HepG2 (cell line): ENCODE measurements at regions of chr12 and their contacts with region 1.

Region 1: GRCh38 chr12:94074980-94075928 is 73.1 kb upstream of the PLXNC1 start:
- DNase-seq: peak; percentile 60
- ATAC-seq: peak; percentile 81
- H3K4me3 ChIP-seq: no peak overlapping the region
- H3K27ac ChIP-seq: no peak overlapping the region
- H3K4me1 ChIP-seq: peaks cover 63% of the 10 kb centered on the region
- H3K27me3 ChIP-seq: no peaks in the 10 kb centered on the region
- CTCF ChIP-seq: peak; percentile 64
- EP300 ChIP-seq: no peak
- POLR2A ChIP-seq: no peak
- RAD21 ChIP-seq: 0 out of 2 replicates have a peak, but pooled peaks have one; percentile 28

Region 2: DNA sequence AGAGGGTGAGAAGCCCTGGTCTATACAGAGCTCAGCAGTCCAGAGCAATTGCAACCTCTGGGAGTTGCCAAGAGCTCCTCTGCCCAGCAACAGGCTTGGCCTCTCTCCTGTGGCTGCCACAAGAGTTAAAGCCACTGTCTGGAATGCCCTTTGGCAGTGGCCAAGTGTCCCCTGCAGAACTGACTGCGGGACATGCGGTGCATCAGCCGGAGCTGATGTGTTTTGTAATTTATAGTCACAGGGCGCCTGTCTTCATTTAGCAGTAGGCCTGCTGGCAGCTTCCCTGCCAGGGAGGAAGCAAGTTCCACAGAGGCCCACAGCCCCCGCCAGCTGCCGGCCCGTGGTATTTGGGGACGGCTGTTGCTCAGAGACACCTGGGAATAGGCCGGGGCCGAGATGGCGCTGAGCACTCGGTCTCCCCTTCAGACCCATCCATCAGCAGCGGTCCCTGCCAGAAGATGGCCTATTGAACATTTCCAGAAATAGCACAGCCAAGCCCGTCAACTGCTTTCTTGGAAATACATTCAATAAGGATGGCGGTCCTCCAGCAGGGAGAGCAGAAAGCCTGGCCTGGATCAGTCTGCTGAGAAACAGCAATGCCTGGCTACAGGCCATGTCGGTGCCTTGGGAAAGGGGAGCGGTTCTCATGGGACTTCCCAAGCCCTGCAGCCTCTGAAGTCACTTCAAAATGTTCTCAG is 180.7 kb before region 1 on chr12:
- CTCF ChIA-PET with region 1: no interaction called
- POLR2A ChIA-PET with region 1: no interaction called
- in situ Hi-C with region 1: no loop called
- intact Hi-C with region 1: no loop called
- DNase-seq: no peak
- ATAC-seq: no peak
- H3K4me3 ChIP-seq: no peak overlapping the region
- H3K27ac ChIP-seq: no peak overlapping the region
- H3K4me1 ChIP-seq: no peaks in the 10 kb centered on the region
- H3K27me3 ChIP-seq: 0 out of 5 replicates have a peak, but pooled peaks cover 0 to 1% of the 10 kb centered on the region in 2 experiments
- CTCF ChIP-seq: no peak
- EP300 ChIP-seq: no peak
- POLR2A ChIP-seq: no peak
- RAD21 ChIP-seq: no peak

Region 3: DNA sequence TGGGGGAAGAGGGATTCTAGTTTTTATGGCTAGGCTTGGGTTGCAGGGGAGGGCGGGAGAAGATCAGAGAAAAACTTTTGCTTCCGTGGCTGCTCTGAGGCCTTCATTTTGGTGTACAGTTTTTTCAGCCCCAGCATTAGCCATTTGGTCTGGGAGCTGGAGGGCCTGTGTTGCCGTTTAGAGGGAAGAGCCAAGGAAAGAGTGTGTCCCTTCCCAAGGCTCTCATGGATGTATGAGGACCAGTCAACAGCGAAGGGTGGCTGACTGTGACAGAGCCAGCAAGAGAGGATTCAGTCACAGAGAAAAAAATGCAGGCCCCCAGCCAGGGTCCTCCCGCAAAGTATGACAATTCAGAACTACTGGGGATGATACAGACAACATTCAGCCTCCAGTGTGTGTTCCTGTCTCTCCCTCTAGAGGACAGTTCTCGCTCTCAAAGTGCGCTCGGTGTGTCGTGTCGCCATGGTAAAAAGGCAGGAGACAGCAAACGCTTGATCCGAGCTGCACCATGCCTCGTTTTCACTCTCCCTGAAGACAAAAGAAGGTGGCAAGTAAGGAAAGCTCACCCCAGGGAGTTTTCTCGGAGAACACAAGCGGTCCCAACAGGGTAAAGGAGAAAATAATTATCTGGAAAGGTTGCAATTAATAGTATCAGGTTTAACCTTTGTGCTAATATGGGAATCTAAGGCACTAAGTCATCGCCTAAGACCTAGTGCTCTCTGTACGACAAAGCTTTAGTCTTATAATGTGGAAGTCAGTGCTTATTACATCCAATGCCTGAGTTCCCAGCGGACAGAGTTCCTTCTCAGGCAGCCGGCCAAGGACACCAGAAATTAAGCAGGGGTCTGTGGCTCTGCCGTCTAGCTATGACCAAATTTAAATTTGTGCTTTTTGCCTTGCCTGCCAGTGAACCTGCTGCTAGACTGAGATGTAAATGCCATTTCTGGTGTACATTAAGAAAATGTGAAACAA is 84.1 kb before region 1 on chr12:
- CTCF ChIA-PET with region 1: no interaction called
- POLR2A ChIA-PET with region 1: no interaction called
- in situ Hi-C with region 1: no loop called
- intact Hi-C with region 1: loop called (anchors 5 kb)
- DNase-seq: peak; percentile 45
- ATAC-seq: peak; percentile 100
- H3K4me3 ChIP-seq: peak overlapping the region in 1 of 3 experiments; percentile 11; a peak in 1 of 6 replicates
- H3K27ac ChIP-seq: no peak overlapping the region
- H3K4me1 ChIP-seq: no peaks in the 10 kb centered on the region; the same call in 1 of the 2 replicates
- H3K27me3 ChIP-seq: no peaks in the 10 kb centered on the region; a peak in 1 of 5 replicates
- CTCF ChIP-seq: peak; percentile 82
- EP300 ChIP-seq: no peak
- POLR2A ChIP-seq: no peak
- RAD21 ChIP-seq: no peak; the same call in 1 of the 2 replicates

Region 4: DNA sequence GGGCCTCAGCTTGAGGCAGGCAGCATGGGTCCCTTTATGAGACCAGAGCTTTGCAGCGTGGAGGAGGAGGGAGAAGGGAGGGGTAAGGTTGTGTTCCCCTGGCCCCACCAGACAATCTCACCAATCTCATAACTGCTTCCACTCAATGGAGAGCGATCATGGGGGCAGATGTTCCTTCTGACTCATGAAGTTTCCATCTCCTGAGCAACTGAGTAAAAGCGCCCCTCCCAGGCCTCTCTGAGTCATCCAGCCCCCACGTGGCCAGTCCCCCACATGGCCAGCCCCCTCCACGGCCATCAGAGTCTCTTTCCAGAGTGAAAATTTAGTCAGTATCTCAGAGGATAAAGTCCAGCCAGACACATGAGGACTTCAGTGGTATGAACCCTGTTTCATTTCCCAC is 33.9 kb after region 1 on chr12:
- CTCF ChIA-PET with region 1: no interaction called
- POLR2A ChIA-PET with region 1: no interaction called
- in situ Hi-C with region 1: no loop called
- intact Hi-C with region 1: no loop called
- DNase-seq: no peak
- ATAC-seq: no peak
- H3K4me3 ChIP-seq: no peak overlapping the region
- H3K27ac ChIP-seq: no peak overlapping the region
- H3K4me1 ChIP-seq: peaks cover 9% of the 10 kb centered on the region; the same call in 1 of the 2 replicates
- H3K27me3 ChIP-seq: peaks cover 0 to 2% of the 10 kb centered on the region in 2 experiments; a peak in 1 of 5 replicates
- CTCF ChIP-seq: no peak
- EP300 ChIP-seq: no peak
- POLR2A ChIP-seq: no peak
- RAD21 ChIP-seq: no peak

Region 5: GRCh38 chr12:94123127-94123526 is 47.9 kb after region 1 on chr12:
- CTCF ChIA-PET with region 1: no interaction called
- POLR2A ChIA-PET with region 1: no interaction called
- in situ Hi-C with region 1: no loop called
- intact Hi-C with region 1: no loop called
- DNase-seq: no peak
- ATAC-seq: no peak
- H3K4me3 ChIP-seq: no peak overlapping the region
- H3K27ac ChIP-seq: no peak overlapping the region
- H3K4me1 ChIP-seq: no peaks in the 10 kb centered on the region
- H3K27me3 ChIP-seq: peaks cover 0 to 12% of the 10 kb centered on the region in 2 experiments; a peak in 2 of 5 replicates
- CTCF ChIP-seq: no peak
- EP300 ChIP-seq: no peak
- POLR2A ChIP-seq: no peak
- RAD21 ChIP-seq: no peak

Region 6: GRCh38 chr12:94401326-94401725 is 326.1 kb after region 1 on chr12:
- CTCF ChIA-PET with region 1: no interaction called
- POLR2A ChIA-PET with region 1: no interaction called
- in situ Hi-C with region 1: no loop called
- intact Hi-C with region 1: no loop called
- DNase-seq: no peak
- ATAC-seq: no peak
- H3K4me3 ChIP-seq: no peak overlapping the region
- H3K27ac ChIP-seq: no peak overlapping the region
- H3K4me1 ChIP-seq: no peaks in the 10 kb centered on the region
- H3K27me3 ChIP-seq: no peaks in the 10 kb centered on the region
- CTCF ChIP-seq: no peak
- EP300 ChIP-seq: no peak
- POLR2A ChIP-seq: no peak
- RAD21 ChIP-seq: no peak